ENCODE measurements at regions of chr16 and their contacts with region 1.

Region 1: DNA sequence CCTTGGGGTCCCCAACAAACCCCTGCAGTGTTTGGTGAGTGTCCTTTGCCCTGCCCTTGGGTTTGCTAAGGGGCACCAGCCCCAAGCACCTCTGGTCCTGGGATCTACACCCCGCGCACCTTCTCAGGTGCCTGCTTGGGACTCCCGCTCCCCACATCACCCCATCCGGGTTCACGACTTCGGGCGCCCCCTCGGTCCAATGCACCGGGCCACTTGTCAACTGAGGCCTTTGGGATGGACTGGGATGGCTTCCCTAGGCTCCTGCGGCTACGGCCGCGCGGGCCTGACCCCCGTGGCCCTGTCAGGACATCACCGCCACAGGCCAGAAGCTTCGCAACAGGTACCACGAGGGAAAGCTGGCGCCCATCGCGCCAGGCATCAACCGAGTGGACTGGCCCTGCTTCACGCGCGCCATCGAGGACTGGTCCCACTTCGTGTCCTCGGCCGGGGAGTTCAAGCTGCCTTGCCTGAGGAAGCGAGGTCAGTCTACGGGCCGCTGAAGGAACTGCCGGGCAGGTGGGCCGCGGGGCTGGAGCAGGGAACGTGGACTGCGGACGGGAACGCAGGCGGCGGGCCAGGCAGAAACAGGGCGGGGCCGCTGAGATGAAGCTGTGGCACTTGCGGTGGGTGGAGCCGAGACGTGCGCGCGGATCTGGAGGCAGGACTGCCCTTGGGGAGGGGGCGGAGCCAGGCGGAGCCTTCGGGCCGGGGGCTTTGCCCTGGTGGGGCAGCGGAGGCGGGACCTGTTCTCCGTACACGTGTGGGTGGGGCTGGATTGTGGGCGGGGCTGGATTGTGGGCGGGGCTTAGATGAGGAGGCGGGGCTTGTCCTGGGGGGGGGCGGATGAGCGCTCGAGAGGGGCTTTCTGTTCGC is 13.6 kb upstream of the CNGB1 start:
- DNase-seq: peak; percentile 61
- H3K4me3 ChIP-seq: peak overlapping the region; percentile 60 to 72 (median 64)
- H3K27ac ChIP-seq: no peak overlapping the region
- H3K4me1 ChIP-seq: peaks cover 25% of the 10 kb centered on the region
- H3K27me3 ChIP-seq: no peaks in the 10 kb centered on the region
- CTCF ChIP-seq: no peak

Region 2: GRCh38 chr16:57906382-57907316 is 77.9 kb before region 1 on chr16:
- CTCF ChIA-PET with region 1: no interaction called
- dilution Hi-C with region 1: loop called (anchors 5 kb)
- in situ Hi-C with region 1: no loop called
- intact Hi-C with region 1: no loop called
- DNase-seq: no peak
- H3K4me3 ChIP-seq: no peak overlapping the region
- H3K27ac ChIP-seq: no peak overlapping the region
- H3K4me1 ChIP-seq: peaks cover 1% of the 10 kb centered on the region
- H3K27me3 ChIP-seq: no peaks in the 10 kb centered on the region
- CTCF ChIP-seq: peak; percentile 54 to 75

Region 3: DNA sequence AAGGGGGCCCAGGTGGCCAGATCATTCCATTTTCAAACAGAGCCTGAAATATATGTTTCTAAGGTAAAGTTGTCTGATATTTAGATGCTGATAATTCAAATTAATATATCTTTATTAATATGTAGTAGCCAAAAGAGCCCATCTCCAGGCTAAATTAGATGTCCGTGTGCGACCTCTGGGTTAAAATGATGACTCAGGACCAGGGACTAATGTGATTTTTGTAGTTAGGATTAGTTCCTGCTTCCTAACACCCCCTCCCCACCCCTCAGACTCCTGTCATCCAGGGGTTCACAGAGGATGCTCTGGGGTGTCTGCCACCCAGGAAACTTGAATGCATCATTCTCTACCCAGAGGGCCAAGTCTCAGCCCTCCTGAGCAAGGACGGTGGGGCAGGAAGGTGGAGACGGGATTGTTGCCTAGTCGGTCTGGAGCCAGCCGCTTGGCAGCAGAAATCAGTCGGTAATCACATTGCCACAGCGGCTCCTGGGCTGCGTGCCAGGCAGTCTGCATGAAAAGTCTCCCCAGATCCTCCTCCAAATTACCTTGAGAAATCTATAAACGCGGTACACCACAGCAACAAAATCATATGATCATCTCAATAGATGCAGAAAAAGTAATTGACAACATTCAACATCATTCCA is 43.4 kb before region 1 on chr16:
- CTCF ChIA-PET with region 1: no interaction called
- dilution Hi-C with region 1: loop called (anchors 5 kb)
- in situ Hi-C with region 1: no loop called
- intact Hi-C with region 1: no loop called
- DNase-seq: peak; percentile 39
- H3K4me3 ChIP-seq: no peak overlapping the region
- H3K27ac ChIP-seq: no peak overlapping the region
- H3K4me1 ChIP-seq: peaks cover 19% of the 10 kb centered on the region
- H3K27me3 ChIP-seq: no peaks in the 10 kb centered on the region
- CTCF ChIP-seq: no peak

Region 4: DNA sequence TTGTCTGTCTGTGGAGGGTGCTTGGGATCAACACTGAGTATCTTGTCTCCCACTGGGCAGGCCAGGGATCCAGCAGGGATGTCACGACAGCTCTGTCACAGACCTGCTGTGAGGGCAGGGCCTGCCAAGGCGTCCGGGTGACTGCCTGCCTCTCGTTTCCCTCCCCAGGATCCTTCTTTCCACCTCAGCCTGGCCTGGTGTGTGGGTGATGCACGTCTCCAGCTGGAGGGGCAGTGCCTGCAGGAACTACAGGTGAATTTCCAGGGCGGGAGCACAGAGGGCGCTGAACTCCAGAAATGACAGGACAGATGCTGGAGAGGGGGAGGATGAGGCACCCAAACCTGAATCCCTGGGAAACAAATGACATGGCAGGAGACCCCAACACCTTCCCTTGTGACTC is 34.2 kb after region 1 on chr16:
- CTCF ChIA-PET with region 1: interaction called, 3 read pairs
- dilution Hi-C with region 1: loop called (anchors 5 kb)
- in situ Hi-C with region 1: no loop called
- intact Hi-C with region 1: no loop called
- DNase-seq: no peak
- H3K4me3 ChIP-seq: no peak overlapping the region
- H3K27ac ChIP-seq: no peak overlapping the region
- H3K4me1 ChIP-seq: peaks cover 18% of the 10 kb centered on the region
- H3K27me3 ChIP-seq: no peaks in the 10 kb centered on the region
- CTCF ChIP-seq: no peak